MCF 10A (cell line): ENCODE measurements at regions of chr9 and their contacts with region 1.

Region 1: GRCh38 chr9:133184962-133185361 is 21.2 kb upstream of the GBGT1 start:
- DNase-seq: peak; percentile 77
- H3K4me3 Mint-ChIP-seq: no peak overlapping the region
- H3K27ac Mint-ChIP-seq: no peak overlapping the region
- H3K4me1 Mint-ChIP-seq: peaks cover 5% of the 10 kb centered on the region
- H3K27me3 Mint-ChIP-seq: peaks cover 56% of the 10 kb centered on the region
- CTCF ChIP-seq: peak; percentile 43

Region 2: GRCh38 chr9:133170716-133171559 is 14.0 kb before region 1 on chr9:
- CTCF ChIA-PET with region 1: interaction called, 17 read pairs
- POLR2A ChIA-PET with region 1: no interaction called
- intact Hi-C with region 1: no loop called
- DNase-seq: no peak
- H3K4me3 Mint-ChIP-seq: no peak overlapping the region
- H3K27ac Mint-ChIP-seq: no peak overlapping the region
- H3K4me1 Mint-ChIP-seq: no peaks in the 10 kb centered on the region
- H3K27me3 Mint-ChIP-seq: peaks cover 39% of the 10 kb centered on the region
- CTCF ChIP-seq: no peak

Region 3: GRCh38 chr9:133195029-133195428 is 10.1 kb after region 1 on chr9:
- CTCF ChIA-PET with region 1: no interaction called
- POLR2A ChIA-PET with region 1: no interaction called
- intact Hi-C with region 1: no loop called
- DNase-seq: no peak
- H3K4me3 Mint-ChIP-seq: no peak overlapping the region
- H3K27ac Mint-ChIP-seq: no peak overlapping the region
- H3K4me1 Mint-ChIP-seq: no peaks in the 10 kb centered on the region
- H3K27me3 Mint-ChIP-seq: peaks cover 24% of the 10 kb centered on the region
- CTCF ChIP-seq: no peak

Region 4: DNA sequence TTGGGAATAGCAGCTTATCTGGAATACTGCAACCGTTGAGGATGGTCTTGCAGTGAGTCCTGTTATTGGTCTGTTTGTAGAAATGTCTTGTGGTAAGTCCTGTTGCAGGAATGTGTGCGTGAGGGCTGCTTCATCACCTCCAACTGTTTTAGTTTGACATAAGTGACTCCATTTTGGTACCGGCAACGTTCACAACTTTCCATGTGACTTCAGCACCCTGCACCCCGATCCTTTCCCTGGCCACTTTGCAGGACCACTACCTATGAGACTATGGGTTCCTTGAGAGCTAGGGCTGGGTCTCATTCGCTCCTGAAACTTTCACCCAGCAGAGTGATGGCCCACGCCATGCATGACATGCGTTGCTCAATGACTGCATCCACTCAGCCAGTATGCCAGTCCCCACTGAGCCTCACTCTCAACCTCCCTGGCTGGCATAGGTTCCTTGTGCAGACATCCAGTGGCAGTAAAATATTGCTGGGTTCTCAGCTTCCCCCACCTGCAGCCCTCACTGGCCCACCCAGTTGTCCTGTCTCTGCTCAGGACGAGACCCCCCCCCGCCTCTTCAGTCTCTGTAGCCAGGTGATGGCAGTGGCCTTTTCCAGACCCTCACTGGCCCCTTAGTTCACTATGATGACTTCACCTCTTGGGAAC is 143.0 kb after region 1 on chr9:
- CTCF ChIA-PET with region 1: interaction called, 72 read pairs
- POLR2A ChIA-PET with region 1: interaction called, 5 read pairs
- intact Hi-C with region 1: loop called (anchors 1 kb)
- DNase-seq: no peak
- H3K4me3 Mint-ChIP-seq: no peak overlapping the region
- H3K27ac Mint-ChIP-seq: no peak overlapping the region
- H3K4me1 Mint-ChIP-seq: peaks cover 5% of the 10 kb centered on the region
- H3K27me3 Mint-ChIP-seq: peaks cover 16% of the 10 kb centered on the region
- CTCF ChIP-seq: no peak

Region 5: GRCh38 chr9:133335878-133336811 is 151.2 kb after region 1 on chr9 and contains the start of gene SURF6:
- CTCF ChIA-PET with region 1: interaction called, 72 read pairs
- POLR2A ChIA-PET with region 1: interaction called, 4 read pairs
- intact Hi-C with region 1: no loop called
- DNase-seq: peak; percentile 91
- H3K4me3 Mint-ChIP-seq: peak within 1 kb of the TSS; percentile 93
- H3K27ac Mint-ChIP-seq: peak within 1 kb of the TSS; percentile 81
- H3K4me1 Mint-ChIP-seq: peaks cover 6% of the 10 kb centered on the region
- H3K27me3 Mint-ChIP-seq: no peaks in the 10 kb centered on the region
- CTCF ChIP-seq: no peak
- total RNA-seq, gene SURF6: 30.2 and 40.5 TPM in 2 replicates

Region 6: GRCh38 chr9:133429641-133430161 is 244.7 kb after region 1 on chr9:
- CTCF ChIA-PET with region 1: no interaction called
- POLR2A ChIA-PET with region 1: no interaction called
- intact Hi-C with region 1: no loop called
- DNase-seq: no peak
- H3K4me3 Mint-ChIP-seq: no peak overlapping the region
- H3K27ac Mint-ChIP-seq: no peak overlapping the region
- H3K4me1 Mint-ChIP-seq: no peaks in the 10 kb centered on the region
- H3K27me3 Mint-ChIP-seq: peaks cover 34% of the 10 kb centered on the region
- CTCF ChIP-seq: no peak

Region 7: DNA sequence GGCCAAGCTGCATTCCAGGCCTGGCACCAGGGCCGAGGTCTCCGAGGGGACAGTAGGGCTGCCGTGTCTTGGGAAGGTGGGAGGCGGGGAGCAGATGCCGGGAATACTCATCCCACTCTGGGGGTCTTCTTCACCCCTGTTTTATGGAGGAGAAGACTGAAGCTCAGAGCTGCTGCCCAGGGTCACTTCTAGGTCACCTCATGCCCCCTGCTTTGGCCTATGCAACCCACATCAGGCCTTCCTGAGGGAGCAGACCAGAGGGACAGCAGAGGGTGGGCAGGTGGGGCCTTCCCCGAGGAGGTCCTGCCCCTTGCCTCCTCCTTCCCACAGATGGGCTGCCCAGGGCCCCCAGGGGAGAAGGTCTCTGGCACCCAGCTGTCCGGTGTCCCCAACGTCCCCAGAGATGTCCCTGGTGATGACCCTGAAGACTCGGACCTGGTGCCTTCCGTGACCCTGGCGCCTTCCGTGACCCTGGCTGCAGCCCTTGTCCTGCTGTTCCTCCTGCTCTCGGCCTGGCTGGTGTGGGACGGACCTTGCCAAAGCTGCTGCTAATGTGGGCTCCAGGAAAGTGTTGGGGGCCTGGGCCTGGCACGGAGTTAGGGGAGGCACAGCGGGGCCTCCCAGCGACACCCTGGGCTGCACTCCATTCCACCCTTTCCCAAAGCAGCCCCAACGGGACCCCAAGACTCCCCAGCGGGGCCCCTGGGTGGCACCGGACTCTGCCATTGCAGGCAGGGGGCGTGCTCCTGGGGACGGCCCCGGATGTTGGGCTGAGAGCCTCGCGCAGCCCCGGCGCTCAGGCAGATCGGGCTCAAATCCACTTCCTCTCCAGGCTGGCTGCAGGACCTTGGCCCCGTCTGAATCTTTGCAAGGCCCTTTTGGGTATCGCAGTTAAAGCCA is 300.6 kb after region 1 on chr9:
- CTCF ChIA-PET with region 1: interaction called, 16 read pairs
- POLR2A ChIA-PET with region 1: no interaction called
- intact Hi-C with region 1: loop called (anchors 1 kb)
- DNase-seq: no peak
- H3K4me3 Mint-ChIP-seq: no peak overlapping the region
- H3K27ac Mint-ChIP-seq: no peak overlapping the region
- H3K4me1 Mint-ChIP-seq: no peaks in the 10 kb centered on the region
- H3K27me3 Mint-ChIP-seq: peaks cover 10% of the 10 kb centered on the region
- CTCF ChIP-seq: no peak